A673 (cell line): ENCODE measurements at regions of chr9 and their contacts with region 1.

Region 1: DNA sequence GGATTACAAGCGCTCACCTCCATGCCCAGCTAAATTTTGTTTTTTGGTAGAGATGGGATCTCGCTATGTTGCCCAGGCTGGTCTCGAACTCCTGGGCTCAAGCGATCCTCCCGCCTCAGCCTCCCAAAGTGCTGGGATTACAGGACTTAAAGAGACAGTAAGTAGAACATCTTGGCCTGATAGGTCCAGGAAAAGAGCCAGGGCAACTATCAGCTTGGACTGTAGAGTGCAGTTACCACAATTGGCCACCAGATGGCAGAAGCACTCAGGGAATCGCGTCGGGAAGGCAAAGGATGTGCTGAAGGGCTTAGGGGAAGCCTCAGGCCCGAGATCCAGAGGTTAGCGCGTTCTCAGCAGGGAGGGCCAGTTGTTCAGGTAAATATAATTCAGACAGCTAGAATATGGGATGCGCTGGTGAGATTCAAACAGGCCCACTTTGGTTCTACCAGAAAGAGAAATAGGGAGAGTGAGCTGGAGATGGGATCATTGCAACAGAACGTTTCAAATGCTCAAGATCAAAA is 21.5 kb downstream of the C9orf57 start:
- DNase-seq: peak; percentile 81
- H3K4me3 ChIP-seq: no peak overlapping the region
- H3K27ac ChIP-seq: no peak overlapping the region
- H3K4me1 ChIP-seq: no peaks in the 10 kb centered on the region
- H3K27me3 ChIP-seq: no peaks in the 10 kb centered on the region
- CTCF ChIP-seq: peak; percentile 88

Region 2: DNA sequence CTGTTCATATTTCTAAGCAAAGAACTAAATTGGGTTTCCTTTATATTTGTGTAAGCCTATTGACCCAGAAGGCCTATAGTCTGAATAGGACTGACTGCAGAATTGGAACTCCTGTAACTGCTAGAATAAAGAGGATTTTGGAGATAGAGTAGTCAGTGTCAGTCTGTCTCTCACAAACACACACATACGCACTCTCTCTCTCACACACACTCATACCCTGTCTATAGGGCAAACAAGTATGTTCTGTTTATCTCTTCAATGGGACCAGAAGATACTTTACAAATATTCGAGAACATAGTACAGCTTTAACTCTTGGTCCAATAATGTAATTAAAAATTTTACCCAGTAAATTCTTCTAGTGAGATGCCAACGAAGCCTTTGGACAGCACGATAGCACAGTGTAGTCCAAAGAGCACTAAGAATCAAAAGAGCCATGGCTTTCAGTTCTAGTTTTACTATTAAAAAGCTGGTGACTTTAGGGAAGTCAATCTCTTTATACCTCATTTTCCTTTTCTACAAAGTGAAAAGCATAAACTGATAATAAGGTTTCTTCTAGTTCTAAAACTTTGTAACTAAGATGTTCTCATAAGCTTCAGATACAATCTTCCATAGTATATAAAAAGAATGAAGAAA is 147.3 kb before region 1 on chr9:
- CTCF ChIA-PET with region 1: no interaction called
- POLR2A ChIA-PET with region 1: no interaction called
- intact Hi-C with region 1: no loop called
- DNase-seq: no peak
- H3K4me3 ChIP-seq: no peak overlapping the region
- H3K27ac ChIP-seq: no peak overlapping the region
- H3K4me1 ChIP-seq: no peaks in the 10 kb centered on the region
- H3K27me3 ChIP-seq: no peaks in the 10 kb centered on the region
- CTCF ChIP-seq: no peak

Region 3: GRCh38 chr9:72022841-72023240 is 16.1 kb before region 1 on chr9:
- CTCF ChIA-PET with region 1: interaction called, 16 read pairs
- POLR2A ChIA-PET with region 1: no interaction called
- intact Hi-C with region 1: no loop called
- DNase-seq: no peak
- H3K4me3 ChIP-seq: no peak overlapping the region
- H3K27ac ChIP-seq: no peak overlapping the region
- H3K4me1 ChIP-seq: no peaks in the 10 kb centered on the region
- H3K27me3 ChIP-seq: no peaks in the 10 kb centered on the region
- CTCF ChIP-seq: no peak

Region 4: DNA sequence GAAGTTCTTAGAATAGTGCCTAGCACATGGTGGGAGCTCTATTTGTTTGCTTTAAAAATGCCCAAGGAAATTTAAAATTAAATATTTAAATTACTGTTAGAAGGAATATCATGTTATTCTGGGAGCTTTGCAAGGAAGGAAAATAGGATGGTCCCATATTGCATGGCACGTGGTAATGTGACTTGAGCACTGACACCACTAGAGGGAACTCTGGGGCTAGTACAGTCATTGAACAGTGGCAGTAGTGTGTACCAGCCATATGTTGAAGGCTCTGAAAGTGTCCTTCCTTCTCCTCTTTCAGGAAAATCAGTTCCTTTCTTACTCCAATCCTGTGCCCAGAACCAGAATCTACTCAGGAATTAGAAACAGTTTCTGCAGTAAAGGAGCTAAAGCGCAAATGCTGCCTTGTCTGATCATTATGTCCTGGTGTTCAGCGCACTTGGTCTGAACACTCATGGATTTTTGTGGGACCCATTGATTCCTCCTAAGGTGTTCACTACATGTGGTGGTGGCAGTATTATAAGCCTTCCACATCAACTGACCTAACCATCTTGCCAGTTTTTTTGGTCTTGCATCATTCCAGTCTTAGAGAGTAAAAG is 164.4 kb after region 1 on chr9:
- CTCF ChIA-PET with region 1: no interaction called
- POLR2A ChIA-PET with region 1: no interaction called
- intact Hi-C with region 1: loop called (anchors 5 kb)
- DNase-seq: peak; percentile 67
- H3K4me3 ChIP-seq: no peak overlapping the region
- H3K27ac ChIP-seq: no peak overlapping the region
- H3K4me1 ChIP-seq: no peaks in the 10 kb centered on the region
- H3K27me3 ChIP-seq: no peaks in the 10 kb centered on the region
- CTCF ChIP-seq: peak; percentile 76

Region 5: GRCh38 chr9:72271613-72272478 is 232.9 kb after region 1 on chr9:
- CTCF ChIA-PET with region 1: interaction called, 22 read pairs
- POLR2A ChIA-PET with region 1: no interaction called
- intact Hi-C with region 1: loop called (anchors 1 kb)
- DNase-seq: peak; percentile 62
- H3K4me3 ChIP-seq: no peak overlapping the region
- H3K27ac ChIP-seq: no peak overlapping the region
- H3K4me1 ChIP-seq: no peaks in the 10 kb centered on the region
- H3K27me3 ChIP-seq: no peaks in the 10 kb centered on the region
- CTCF ChIP-seq: peak; percentile 85

Region 6: GRCh38 chr9:72592502-72593403 is 553.8 kb after region 1 on chr9:
- CTCF ChIA-PET with region 1: no interaction called
- POLR2A ChIA-PET with region 1: no interaction called
- intact Hi-C with region 1: loop called (anchors 5 kb)
- DNase-seq: peak; percentile 67
- H3K4me3 ChIP-seq: no peak overlapping the region
- H3K27ac ChIP-seq: no peak overlapping the region
- H3K4me1 ChIP-seq: no peaks in the 10 kb centered on the region
- H3K27me3 ChIP-seq: no peaks in the 10 kb centered on the region
- CTCF ChIP-seq: peak; percentile 83